A549 (cell line): ENCODE measurements at regions of chr20 and their contacts with region 1.

Region 1: GRCh38 chr20:1857466-1857865 is 37.7 kb upstream of the SIRPA start:
- DNase-seq: no peak
- ATAC-seq: no peak
- H3K4me3 ChIP-seq: no peak overlapping the region
- H3K27ac ChIP-seq: no peak overlapping the region
- H3K4me1 ChIP-seq: no peaks in the 10 kb centered on the region
- CTCF ChIP-seq: no peak
- EP300 ChIP-seq: no peak
- POLR2A ChIP-seq: no peak
- RAD21 ChIP-seq: no peak

Region 2: GRCh38 chr20:1830240-1830639 is 27.2 kb before region 1 on chr20:
- CTCF ChIA-PET with region 1: interaction called, 11 read pairs
- POLR2A ChIA-PET with region 1: no interaction called
- DNase-seq: peak; percentile 79 to 91
- ATAC-seq: peak; percentile 77 to 87
- H3K4me3 ChIP-seq: no peak overlapping the region
- H3K27ac ChIP-seq: peak overlapping the region; percentile 32 to 69; a peak in 4 of 6 replicates
- H3K4me1 ChIP-seq: peaks cover 36% of the 10 kb centered on the region
- CTCF ChIP-seq: no peak
- EP300 ChIP-seq: peak in 1 of 2 experiments; percentile 57; a peak in 1 of 5 replicates
- POLR2A ChIP-seq: no peak
- RAD21 ChIP-seq: peak in 1 of 2 experiments; percentile 7; a peak in 1 of 5 replicates

Region 3: DNA sequence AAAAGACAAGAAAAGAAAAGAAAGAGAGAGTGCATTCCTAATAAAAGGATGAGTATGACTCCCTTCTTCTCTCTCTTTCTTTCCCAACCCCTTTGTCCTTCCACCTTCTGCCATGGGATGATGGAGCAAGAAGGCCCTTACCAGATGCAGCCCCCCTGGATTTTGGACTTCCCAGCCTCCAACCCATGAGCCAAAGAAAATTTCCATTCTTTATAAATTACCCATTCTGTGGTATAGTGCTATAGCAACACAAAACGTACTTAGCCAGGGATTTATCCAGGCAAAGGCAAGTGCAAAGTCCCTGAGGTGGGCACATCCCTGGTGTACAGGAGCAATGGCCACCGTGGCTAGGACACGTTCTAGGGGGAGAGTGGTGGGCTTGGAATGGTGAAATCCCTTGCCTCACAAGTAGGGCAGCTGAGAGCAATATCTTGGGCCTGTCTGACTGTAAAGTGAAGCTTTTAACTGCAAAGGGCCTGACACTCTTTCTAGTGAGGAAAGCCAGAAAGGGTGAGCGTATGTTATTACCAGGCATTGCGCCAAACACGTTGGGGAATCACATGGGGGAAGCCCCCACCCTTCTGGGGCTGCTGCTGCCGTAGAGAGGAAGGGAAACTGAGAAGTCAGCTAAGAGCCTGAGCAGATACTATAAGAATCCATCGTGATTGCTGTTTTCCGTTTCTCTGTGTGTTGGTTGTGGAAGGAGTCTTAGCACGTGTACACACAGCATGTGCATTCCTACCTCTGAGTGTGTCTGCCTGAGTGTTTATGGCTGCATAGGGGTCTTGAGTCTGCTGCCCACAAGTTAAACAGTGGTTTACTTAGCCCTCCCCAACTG is 12.9 kb before region 1 on chr20:
- CTCF ChIA-PET with region 1: interaction called, 13 read pairs
- POLR2A ChIA-PET with region 1: no interaction called
- DNase-seq: no peak
- ATAC-seq: no peak; a peak in 1 of 6 replicates
- H3K4me3 ChIP-seq: no peak overlapping the region
- H3K27ac ChIP-seq: no peak overlapping the region
- H3K4me1 ChIP-seq: 0 out of 3 replicates have a peak, but pooled peaks cover 7% of the 10 kb centered on the region
- CTCF ChIP-seq: no peak
- EP300 ChIP-seq: no peak
- POLR2A ChIP-seq: no peak
- RAD21 ChIP-seq: no peak